Transverse colon (tissue), 4 donors: ENCODE measurements at regions of chr13 and their contacts with region 1.

Region 1: GRCh38 chr13:49858183-49858856 is 65.8 kb upstream of the KPNA3 start:
- DNase-seq: peak; percentile 10
- H3K4me3 ChIP-seq: no peak overlapping the region
- H3K27ac ChIP-seq: peak overlapping the region; percentile 57 to 74 (median 60)
- H3K4me1 ChIP-seq: peaks cover 0 to 11% (median 4%) of the 10 kb centered on the region in 4 donors
- H3K27me3 ChIP-seq: no peaks in the 10 kb centered on the region
- CTCF ChIP-seq: no peak
- EP300 ChIP-seq: peak; percentile 25
- POLR2A ChIP-seq: no peak

Region 2: GRCh38 chr13:48094781-48095502 is 1763.4 kb before region 1 on chr13 and contains the start of gene MED4:
- in situ Hi-C with region 1: no loop called
- intact Hi-C with region 1: loop called (anchors 5 kb)
- DNase-seq: peak; percentile 97
- H3K4me3 ChIP-seq: peak within 1 kb of the TSS; percentile 74 to 96 (median 90)
- H3K27ac ChIP-seq: peak within 1 kb of the TSS; percentile 74 to 91 (median 85)
- H3K4me1 ChIP-seq: peaks cover 10 to 37% (median 15%) of the 10 kb centered on the region in 4 donors
- H3K27me3 ChIP-seq: no peaks in the 10 kb centered on the region
- CTCF ChIP-seq: peak; percentile 99
- EP300 ChIP-seq: no peak
- POLR2A ChIP-seq: peak; percentile 86
- total RNA-seq, gene MED4: 31.4 to 39.7 (median 37.2) TPM

Region 3: GRCh38 chr13:50708461-50708860 is 850.1 kb after region 1 on chr13:
- in situ Hi-C with region 1: no loop called
- intact Hi-C with region 1: no loop called
- DNase-seq: no peak
- H3K4me3 ChIP-seq: no peak overlapping the region
- H3K27ac ChIP-seq: no peak overlapping the region
- H3K4me1 ChIP-seq: peaks cover 0 to 8% (median 0%) of the 10 kb centered on the region in 4 donors
- H3K27me3 ChIP-seq: no peaks in the 10 kb centered on the region
- CTCF ChIP-seq: no peak
- EP300 ChIP-seq: no peak
- POLR2A ChIP-seq: no peak